ENCODE measurements at regions of chr7 and their contacts with region 1.

Region 1: DNA sequence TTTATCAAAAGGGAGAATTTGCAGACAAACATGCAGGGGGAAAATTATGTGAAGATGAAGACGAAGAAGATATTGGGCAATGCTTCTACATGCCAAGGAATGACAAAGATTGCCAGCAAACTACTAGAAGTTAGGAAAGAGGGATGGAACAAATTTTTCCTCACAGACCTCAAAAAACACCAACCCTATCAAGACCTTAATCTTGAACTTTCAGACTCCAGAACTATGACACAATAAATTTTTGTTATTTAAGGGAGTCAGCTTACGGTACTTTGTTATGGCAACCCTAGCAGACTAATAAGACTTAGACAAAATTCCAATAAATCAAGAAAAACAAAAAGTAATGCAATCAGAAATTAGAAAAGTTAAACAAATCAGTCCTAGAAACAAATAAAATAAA is 280.0 kb upstream of the GNAI1 start:
- DNase-seq: no peak
- H3K4me3 Mint-ChIP-seq: no peak overlapping the region
- H3K27ac Mint-ChIP-seq: no peak overlapping the region
- H3K4me1 Mint-ChIP-seq: no peaks in the 10 kb centered on the region
- H3K27me3 Mint-ChIP-seq: no peaks in the 10 kb centered on the region

Region 2: DNA sequence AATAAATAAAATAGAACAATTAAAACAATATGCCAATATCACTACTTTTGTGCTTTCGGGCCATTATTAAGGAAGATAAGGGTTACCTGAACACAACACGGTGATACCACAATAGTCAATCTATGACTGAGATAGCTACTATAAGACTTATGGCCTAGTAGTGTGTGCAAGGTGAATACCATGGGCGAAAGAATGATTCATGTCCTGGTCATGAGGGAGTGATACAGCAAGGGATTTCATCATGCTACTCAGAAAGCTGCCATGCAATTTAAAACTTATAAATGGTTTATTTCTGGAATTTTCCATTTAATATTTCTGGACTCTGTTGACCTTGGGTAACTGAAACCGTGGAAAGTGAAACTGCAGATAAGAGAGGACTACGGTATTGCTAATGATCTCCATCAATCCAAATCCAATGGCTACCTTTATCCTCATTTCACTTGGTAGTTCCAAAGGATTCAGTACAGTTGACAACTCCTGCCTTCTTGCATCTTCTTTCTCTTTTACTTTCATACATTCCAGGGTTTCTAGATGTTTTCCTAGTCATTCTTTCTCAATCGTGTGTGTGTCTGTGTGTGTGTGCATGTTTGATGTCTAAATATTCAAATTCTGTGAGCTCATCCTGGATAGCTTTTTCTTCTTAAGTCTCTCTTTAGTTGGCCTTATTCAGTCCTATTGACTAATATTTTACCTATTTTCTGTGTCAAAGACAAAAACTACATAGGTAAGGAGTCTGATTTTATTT is 300.6 kb before region 1 on chr7:
- intact Hi-C with region 1: no loop called
- DNase-seq: no peak
- H3K4me3 Mint-ChIP-seq: no peak overlapping the region
- H3K27ac Mint-ChIP-seq: no peak overlapping the region
- H3K4me1 Mint-ChIP-seq: no peaks in the 10 kb centered on the region
- H3K27me3 Mint-ChIP-seq: no peaks in the 10 kb centered on the region

Region 3: DNA sequence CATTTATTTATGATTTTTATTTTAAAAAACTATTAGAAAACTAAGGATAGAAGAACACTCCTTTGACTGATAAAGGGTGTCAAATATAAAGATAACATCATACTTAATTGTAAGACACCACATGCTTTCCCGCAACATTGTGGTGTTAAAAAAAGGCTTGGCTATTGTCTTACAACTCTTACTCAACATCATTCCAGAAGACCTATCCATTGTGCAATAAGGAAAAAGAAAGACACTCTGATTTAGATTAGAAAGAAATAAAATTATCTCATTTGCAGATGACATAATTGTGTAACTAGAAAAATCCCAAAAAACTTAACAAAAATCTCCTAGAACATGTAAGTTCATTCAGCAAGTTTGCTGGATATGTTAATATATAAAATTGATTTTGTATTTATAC is 16.7 kb before region 1 on chr7:
- intact Hi-C with region 1: loop called (anchors 1 kb)
- DNase-seq: no peak
- H3K4me3 Mint-ChIP-seq: no peak overlapping the region
- H3K27ac Mint-ChIP-seq: no peak overlapping the region
- H3K4me1 Mint-ChIP-seq: no peaks in the 10 kb centered on the region
- H3K27me3 Mint-ChIP-seq: no peaks in the 10 kb centered on the region